H1 (cell line): ENCODE measurements at regions of chr1 and their contacts with region 1.

Region 1: GRCh38 chr1:223345720-223346119 is 18.3 kb downstream of the SUSD4 start:
- DNase-seq: no peak
- H3K4me3 ChIP-seq: no peak overlapping the region
- H3K27ac ChIP-seq: no peak overlapping the region
- H3K4me1 ChIP-seq: no peaks in the 10 kb centered on the region
- H3K27me3 ChIP-seq: no peaks in the 10 kb centered on the region
- CTCF ChIP-seq: peak; percentile 40 to 49 (median 41)
- EP300 ChIP-seq: no peak
- POLR2A ChIP-seq: no peak
- RAD21 ChIP-seq: peak; percentile 50 to 65

Region 2: DNA sequence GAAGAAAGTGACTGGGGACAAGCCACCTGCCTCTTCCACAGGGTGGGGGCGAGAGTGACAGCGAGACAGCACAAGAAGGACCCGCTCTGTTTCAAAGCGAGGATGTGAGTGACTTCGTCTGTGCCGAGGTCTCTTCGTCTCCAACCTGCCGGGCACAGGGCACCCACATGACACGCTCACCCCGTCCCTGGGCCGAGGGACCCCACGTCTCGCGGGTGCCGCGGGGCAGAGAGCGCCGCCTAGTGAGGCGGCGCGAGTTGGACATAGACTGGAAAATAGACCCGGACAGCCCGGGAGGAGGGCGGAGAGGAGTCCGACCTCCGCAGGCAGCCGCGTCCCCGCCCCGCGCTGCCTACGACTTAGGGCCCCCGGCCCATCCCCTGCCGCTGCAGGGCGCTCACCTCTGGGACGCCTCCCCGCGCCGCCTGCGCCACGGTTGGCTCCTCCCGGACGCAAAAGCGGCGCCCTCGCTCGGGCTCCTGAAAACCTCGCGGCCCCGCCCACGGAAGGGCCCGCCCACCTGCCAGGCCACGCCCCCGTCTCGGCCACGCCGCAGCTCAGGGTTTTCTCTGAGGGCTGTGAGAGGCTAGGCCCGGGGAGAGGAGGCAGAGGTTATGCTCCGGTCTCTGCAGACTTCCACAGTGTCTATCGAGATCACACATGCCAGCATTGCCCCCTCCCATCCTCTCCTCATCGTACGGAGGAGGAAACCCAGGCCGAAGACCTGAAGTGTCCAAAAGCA is 202.8 kb before region 1 on chr1 and contains the start of gene TLR5:
- CTCF ChIA-PET with region 1: no interaction called
- POLR2A ChIA-PET with region 1: no interaction called
- DNase-seq: peak; percentile 67 to 93
- H3K4me3 ChIP-seq: peak within 1 kb of the TSS; percentile 25 to 60 (median 42)
- H3K27ac ChIP-seq: no peak within 1 kb of the TSS
- H3K4me1 ChIP-seq: peaks cover 0 to 12% (median 5%) of the 10 kb centered on the region in 4 experiments; a peak in 5 of 7 replicates
- H3K27me3 ChIP-seq: peaks cover 0 to 6% (median 4%) of the 10 kb centered on the region in 4 experiments; a peak in 4 of 7 replicates
- CTCF ChIP-seq: peak; percentile 52 to 61 (median 61)
- EP300 ChIP-seq: no peak
- POLR2A ChIP-seq: 0 out of 3 replicates have a peak, but pooled peaks of 1 of the 2 experiments have one; percentile 27
- RAD21 ChIP-seq: peak; percentile 25 to 44; a peak in 2 of 4 replicates
- total RNA-seq, gene TLR5: 0.35 and 0.94 TPM in 2 replicates

Region 3: DNA sequence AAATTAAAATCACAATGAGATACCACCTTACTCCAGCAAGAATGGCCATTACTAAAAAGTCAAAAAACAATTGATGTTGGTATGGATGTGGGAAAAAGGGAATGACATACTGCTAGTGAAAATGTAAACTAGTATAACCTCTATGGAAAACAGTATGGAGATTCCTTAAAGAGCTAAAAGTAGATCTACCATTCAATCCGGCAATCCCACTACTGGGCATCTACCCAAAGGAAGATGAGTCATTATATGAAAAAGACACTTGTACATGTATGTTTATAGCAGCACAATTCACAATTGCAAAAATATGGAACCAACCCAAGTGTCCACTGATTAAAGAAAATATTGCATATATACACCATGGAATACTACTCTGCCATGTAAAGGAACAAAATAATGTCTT is 18.9 kb before region 1 on chr1:
- CTCF ChIA-PET with region 1: no interaction called
- POLR2A ChIA-PET with region 1: no interaction called
- DNase-seq: no peak
- H3K4me3 ChIP-seq: no peak overlapping the region
- H3K27ac ChIP-seq: no peak overlapping the region
- H3K4me1 ChIP-seq: peaks cover 0 to 2% (median 0%) of the 10 kb centered on the region in 4 experiments; a peak in 1 of 7 replicates
- H3K27me3 ChIP-seq: no peaks in the 10 kb centered on the region
- CTCF ChIP-seq: no peak
- EP300 ChIP-seq: no peak
- POLR2A ChIP-seq: no peak
- RAD21 ChIP-seq: no peak

Region 4: GRCh38 chr1:223358826-223359225 is 13.1 kb after region 1 on chr1:
- CTCF ChIA-PET with region 1: interaction called, 45 read pairs
- POLR2A ChIA-PET with region 1: interaction called, 3 read pairs
- DNase-seq: no peak
- H3K4me3 ChIP-seq: no peak overlapping the region
- H3K27ac ChIP-seq: no peak overlapping the region
- H3K4me1 ChIP-seq: peaks cover 0 to 5% (median 3%) of the 10 kb centered on the region in 4 experiments; a peak in 2 of 7 replicates
- H3K27me3 ChIP-seq: peaks cover 0 to 16% (median 7%) of the 10 kb centered on the region in 4 experiments; a peak in 4 of 7 replicates
- CTCF ChIP-seq: peak in 2 of 3 experiments; percentile 35 to 36; a peak in 3 of 4 replicates
- EP300 ChIP-seq: no peak
- POLR2A ChIP-seq: no peak
- RAD21 ChIP-seq: peak; percentile 57 to 62

Region 5: GRCh38 chr1:223363856-223364684 is 18.4 kb after region 1 on chr1 and contains the start of gene SUSD4:
- CTCF ChIA-PET with region 1: interaction called, 45 read pairs
- POLR2A ChIA-PET with region 1: no interaction called
- DNase-seq: peak in 1 of 2 experiments; percentile 72
- H3K4me3 ChIP-seq: peak within 1 kb of the TSS; percentile 46 to 96 (median 82)
- H3K27ac ChIP-seq: no peak within 1 kb of the TSS
- H3K4me1 ChIP-seq: peaks cover 2 to 11% (median 4%) of the 10 kb centered on the region in 4 experiments; a peak in 5 of 7 replicates
- H3K27me3 ChIP-seq: peaks cover 7 to 34% (median 22%) of the 10 kb centered on the region in 4 experiments
- CTCF ChIP-seq: no peak
- EP300 ChIP-seq: no peak
- POLR2A ChIP-seq: no peak
- RAD21 ChIP-seq: peak in 1 of 2 experiments; percentile 0; a peak in 1 of 4 replicates
- total RNA-seq, gene SUSD4: 3.2 and 3.9 TPM in 2 replicates

Region 6: GRCh38 chr1:223390618-223391017 is 44.9 kb after region 1 on chr1:
- CTCF ChIA-PET with region 1: no interaction called
- POLR2A ChIA-PET with region 1: no interaction called
- DNase-seq: no peak
- H3K4me3 ChIP-seq: no peak overlapping the region
- H3K27ac ChIP-seq: no peak overlapping the region
- H3K4me1 ChIP-seq: peaks cover 0 to 5% (median under 1%) of the 10 kb centered on the region in 4 experiments; a peak in 3 of 7 replicates
- H3K27me3 ChIP-seq: peaks cover 0 to 29% (median 19%) of the 10 kb centered on the region in 4 experiments; a peak in 5 of 7 replicates
- CTCF ChIP-seq: no peak
- EP300 ChIP-seq: no peak
- POLR2A ChIP-seq: no peak
- RAD21 ChIP-seq: no peak